Lower leg skin (tissue), 4 donors: ENCODE measurements at regions of chr10 and their contacts with region 1.

Region 1: DNA sequence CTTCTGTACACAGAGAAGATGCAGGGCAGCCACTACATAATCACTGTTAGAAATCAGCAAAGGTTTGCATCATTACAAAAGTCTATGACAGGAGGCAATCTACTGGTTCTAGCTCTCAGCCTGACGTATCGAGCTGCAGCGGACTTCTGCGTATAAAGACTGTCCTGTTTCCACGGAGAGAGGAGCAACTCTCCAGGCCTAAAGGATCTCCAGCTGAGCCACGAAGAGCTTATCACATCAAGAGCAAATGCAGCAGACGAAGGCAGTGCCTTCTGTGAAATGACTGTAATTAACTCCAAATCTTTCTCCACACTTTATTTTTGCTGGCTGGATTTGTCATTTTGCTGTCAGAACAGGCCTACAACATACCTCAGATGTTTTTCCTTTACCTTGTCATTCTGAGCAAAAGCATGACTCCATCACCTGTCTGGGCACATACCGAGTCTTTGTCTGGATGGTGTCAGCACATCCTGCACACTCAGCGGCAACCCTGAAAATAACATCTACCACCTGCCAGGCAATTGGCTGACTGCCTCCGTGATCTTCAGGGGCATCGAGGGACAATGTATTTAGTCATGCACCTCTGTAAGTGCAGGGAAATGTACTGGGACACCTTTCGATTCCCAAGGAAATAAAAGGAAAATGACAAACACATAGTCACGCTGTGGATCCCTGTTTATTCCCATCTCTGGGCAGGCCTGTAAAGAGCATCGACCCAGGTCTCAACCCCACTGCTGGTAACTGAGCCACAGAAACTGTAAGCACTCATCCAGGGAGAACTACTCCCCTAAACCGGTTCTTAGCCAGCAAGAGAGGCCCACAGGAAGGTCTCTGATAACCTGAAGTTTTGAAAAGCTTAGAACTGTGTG is 26.3 kb upstream of the SH3PXD2A start:
- DNase-seq: peak; percentile 68 to 69
- H3K4me3 ChIP-seq: no peak overlapping the region
- CTCF ChIP-seq: no peak
- POLR2A ChIP-seq: no peak

Region 2: DNA sequence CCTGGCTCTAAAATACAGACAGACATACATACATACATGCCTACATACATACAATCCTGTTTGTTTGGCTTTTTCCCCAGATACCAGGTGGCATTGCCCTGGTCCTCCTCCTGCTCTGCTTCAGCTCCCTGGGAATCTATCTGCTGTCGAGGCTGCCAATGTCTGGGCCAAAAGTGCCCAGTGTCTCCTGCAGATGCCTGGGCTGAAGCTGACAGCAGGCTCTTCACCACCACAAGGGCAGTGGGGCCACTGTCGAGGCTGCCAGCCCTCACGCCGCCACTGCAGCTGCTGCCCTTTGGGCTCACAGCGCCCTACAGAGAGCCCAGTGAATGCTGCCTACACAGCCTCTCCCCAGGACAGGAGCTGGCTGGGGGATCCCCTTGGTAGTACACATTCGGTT is 54.4 kb after region 1 on chr10:
- intact Hi-C with region 1: loop called (anchors 2 kb)
- DNase-seq: no peak
- H3K4me3 ChIP-seq: no peak overlapping the region
- CTCF ChIP-seq: no peak
- POLR2A ChIP-seq: no peak